ENCODE measurements at regions of chr2 and their contacts with region 1.

Region 1: DNA sequence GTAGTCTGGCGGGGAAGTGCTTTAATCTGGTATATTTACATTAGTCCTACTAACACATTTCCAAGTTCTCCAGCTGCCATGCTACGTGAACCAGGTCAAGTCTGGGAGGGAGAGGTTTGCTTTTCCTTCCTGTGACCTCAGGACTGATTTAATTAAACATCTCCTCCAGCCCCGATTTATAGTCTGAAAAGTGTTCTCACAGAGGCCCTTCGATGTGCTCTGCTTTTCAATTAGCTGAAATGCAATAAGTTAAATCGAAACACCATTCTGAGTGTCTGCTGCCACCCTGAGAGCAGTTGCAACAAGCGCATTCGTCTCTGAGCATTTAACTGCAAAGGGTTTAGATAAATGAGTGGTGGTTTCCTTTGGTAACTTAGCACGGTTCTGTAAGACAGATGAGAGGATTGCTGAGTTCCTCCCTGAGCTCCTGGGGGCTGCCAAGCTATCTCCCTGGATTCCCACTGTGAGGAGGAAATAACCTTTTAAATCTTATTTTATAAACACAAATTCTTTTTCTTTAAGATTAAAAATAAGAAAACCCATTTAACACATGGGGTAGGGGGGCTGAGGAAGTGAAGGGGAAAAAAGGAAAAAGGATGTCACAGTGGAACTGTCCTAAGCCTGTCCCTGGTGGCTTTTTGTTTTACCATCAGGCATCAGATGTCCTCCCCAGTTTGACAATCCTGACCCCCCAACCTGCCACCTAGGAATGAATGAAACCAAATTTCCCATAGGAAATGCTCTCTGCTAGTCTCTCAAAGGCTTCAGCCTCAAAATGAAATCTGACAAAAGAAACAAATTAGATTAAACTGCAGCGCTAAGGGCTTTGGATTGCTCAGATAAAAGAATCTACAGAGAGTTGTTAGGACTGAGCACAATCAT is 56.5 kb upstream of the CREB1 start:
- DNase-seq: peak; percentile 65
- H3K4me3 ChIP-seq: no peak overlapping the region
- H3K27ac ChIP-seq: no peak overlapping the region
- H3K27me3 ChIP-seq: no peaks in the 10 kb centered on the region
- CTCF ChIP-seq: peak; percentile 89

Region 2: GRCh38 chr2:206981739-206982340 is 491.4 kb before region 1 on chr2:
- CTCF ChIA-PET with region 1: interaction called, 121 read pairs
- POLR2A ChIA-PET with region 1: interaction called, 3 read pairs
- DNase-seq: peak; percentile 47
- H3K4me3 ChIP-seq: no peak overlapping the region
- H3K27ac ChIP-seq: no peak overlapping the region
- H3K27me3 ChIP-seq: no peaks in the 10 kb centered on the region
- CTCF ChIP-seq: peak; percentile 95

Region 3: GRCh38 chr2:207073801-207074678 is 399.2 kb before region 1 on chr2:
- CTCF ChIA-PET with region 1: interaction called, 11 read pairs
- POLR2A ChIA-PET with region 1: interaction called, 3 read pairs
- DNase-seq: no peak
- H3K4me3 ChIP-seq: no peak overlapping the region
- H3K27ac ChIP-seq: no peak overlapping the region
- H3K27me3 ChIP-seq: no peaks in the 10 kb centered on the region
- CTCF ChIP-seq: no peak

Region 4: GRCh38 chr2:207143215-207144172 is 329.8 kb before region 1 on chr2:
- CTCF ChIA-PET with region 1: interaction called, 11 read pairs
- POLR2A ChIA-PET with region 1: no interaction called
- DNase-seq: no peak
- H3K4me3 ChIP-seq: no peak overlapping the region
- H3K27ac ChIP-seq: peak overlapping the region; percentile 25
- H3K27me3 ChIP-seq: no peaks in the 10 kb centered on the region
- CTCF ChIP-seq: no peak

Measured in AG04450 (cell line).